Endothelial cell of umbilical vein (primary cell): ENCODE measurements at regions of chr19 and their contacts with region 1.

Region 1: DNA sequence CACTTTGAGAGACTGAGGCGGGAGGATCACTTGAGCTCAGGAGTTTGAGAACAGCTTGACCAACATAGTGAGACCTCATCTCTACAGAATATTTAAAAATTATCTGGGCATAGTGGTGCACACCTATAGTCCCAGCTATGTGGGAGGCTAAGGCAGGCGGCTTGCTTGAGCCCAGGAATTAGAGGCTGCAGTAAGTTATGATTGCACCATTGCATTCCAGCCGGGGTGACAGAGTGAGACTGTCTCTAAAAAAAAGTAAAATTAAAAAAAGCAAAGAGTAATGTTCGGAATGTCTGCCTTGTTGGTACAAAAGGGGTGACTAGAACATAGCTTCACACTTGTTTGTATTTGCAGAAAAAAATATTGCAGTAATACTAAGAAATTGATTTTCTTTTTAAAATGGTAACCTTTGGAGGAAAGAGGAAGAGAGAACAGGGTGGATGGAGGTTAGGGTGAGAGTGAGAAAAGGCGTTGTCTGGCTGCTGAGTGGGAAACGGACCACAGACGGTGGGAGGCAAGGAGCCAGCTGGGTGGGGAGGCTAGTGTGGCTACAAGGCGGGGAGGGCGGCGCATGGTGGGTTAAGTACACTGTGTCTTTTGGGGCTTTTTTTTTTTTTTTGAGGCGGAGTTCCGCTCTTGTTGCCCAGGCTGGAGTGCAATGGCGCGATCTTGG is 10.2 kb downstream of the PPP1R14A start:
- DNase-seq: no peak
- H3K4me3 ChIP-seq: no peak overlapping the region
- H3K27ac ChIP-seq: no peak overlapping the region
- H3K4me1 ChIP-seq: no peaks in the 10 kb centered on the region
- H3K27me3 ChIP-seq: no peaks in the 10 kb centered on the region
- CTCF ChIP-seq: no peak
- POLR2A ChIP-seq: no peak

Region 2: DNA sequence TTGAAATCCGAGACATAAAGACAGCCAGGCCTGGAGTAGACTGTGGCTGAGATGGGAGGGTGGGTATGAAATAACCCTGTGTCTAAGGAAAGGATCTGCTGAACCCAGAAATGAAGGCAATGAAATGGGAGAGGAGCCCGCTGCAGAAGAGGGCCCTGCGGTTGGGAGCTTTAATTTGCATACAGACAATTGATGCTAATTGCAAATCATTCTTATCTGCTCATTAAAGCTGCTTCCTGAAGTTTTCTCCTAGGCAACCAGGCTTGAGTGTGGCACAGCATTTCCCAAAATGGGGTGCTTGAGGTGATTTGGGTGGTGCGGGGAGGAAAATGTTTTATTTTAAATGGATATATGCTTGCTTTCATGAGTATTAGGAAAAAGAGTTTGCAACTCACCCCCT is 77.3 kb before region 1 on chr19:
- CTCF ChIA-PET with region 1: no interaction called
- POLR2A ChIA-PET with region 1: no interaction called
- dilution Hi-C with region 1: no loop called
- intact Hi-C with region 1: loop called (anchors 2 kb)
- DNase-seq: no peak
- H3K4me3 ChIP-seq: no peak overlapping the region
- H3K27ac ChIP-seq: no peak overlapping the region
- H3K4me1 ChIP-seq: no peaks in the 10 kb centered on the region
- H3K27me3 ChIP-seq: no peaks in the 10 kb centered on the region
- CTCF ChIP-seq: no peak
- POLR2A ChIP-seq: no peak

Region 3: DNA sequence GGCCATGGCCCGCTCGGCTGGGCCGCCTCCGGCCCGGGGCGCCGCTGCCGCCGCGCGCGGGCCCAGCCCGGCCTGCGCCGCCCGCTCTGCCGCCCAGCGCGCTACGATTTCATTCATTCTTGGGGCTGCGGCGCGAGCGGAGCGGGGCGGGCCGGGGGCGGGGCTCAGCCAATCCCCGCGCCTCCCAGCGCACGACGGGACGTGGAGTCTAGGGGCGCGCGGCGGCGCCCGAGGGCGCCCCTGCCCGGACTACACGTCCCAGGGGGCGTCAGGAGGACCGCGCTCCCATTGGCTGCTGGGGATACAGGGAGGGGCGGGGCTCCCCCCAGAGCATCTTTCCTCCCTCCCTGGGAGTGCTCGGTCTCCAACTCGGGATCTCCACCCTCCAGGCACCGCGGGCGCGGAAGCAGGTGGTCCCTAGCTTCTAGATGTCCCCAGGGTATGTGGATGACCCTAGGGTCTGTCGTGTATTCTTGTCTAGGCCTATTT is 16.3 kb before region 1 on chr19:
- CTCF ChIA-PET with region 1: interaction called, 26 read pairs
- POLR2A ChIA-PET with region 1: interaction called, 4 read pairs
- dilution Hi-C with region 1: no loop called
- intact Hi-C with region 1: no loop called
- DNase-seq: peak; percentile 77
- H3K4me3 ChIP-seq: peak overlapping the region in 1 of 3 experiments; percentile 14
- H3K27ac ChIP-seq: no peak overlapping the region
- H3K4me1 ChIP-seq: peaks cover 8% of the 10 kb centered on the region
- H3K27me3 ChIP-seq: peaks cover 9 to 14% of the 10 kb centered on the region in 2 experiments
- CTCF ChIP-seq: peak in 1 of 2 donors; percentile 13
- POLR2A ChIP-seq: no peak

Region 4: DNA sequence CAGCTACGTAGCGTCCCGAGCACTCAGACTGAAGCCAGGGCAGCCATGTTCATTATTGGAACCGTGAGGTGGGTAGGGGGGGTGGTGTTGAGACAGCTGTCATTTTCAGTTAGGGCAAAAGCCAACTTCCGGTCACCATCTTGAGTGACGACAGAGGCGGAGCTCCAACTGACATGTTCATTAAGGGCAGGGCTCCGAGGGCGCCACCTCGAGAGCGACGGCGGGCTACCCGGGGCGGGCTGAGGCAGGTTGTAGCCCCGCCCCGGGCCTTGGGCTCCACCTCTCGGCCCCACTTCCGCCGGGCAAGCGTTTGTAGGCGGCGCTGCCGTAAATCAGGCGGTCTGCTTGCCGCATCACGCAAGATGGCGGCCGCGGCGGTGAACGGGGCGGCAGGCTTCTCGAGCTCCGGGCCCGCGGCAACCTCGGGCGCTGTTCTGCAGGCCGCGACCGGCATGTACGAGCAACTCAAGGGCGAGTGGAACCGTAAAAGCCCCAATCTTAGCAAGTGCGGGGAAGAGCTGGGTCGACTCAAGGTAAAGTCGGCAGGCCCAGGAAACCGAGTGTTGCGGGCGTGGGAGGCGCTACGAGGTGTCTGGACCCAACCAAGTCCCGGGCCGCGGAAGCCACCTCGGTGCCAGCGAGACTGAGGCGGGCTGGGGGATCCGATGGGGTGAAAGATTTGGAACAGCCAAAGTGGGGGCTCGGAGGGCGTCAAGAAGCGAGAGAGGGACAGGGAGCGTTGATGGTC is 128.6 kb after region 1 on chr19 and contains the start of gene PSMD8:
- CTCF ChIA-PET with region 1: interaction called, 8 read pairs
- POLR2A ChIA-PET with region 1: no interaction called
- dilution Hi-C with region 1: no loop called
- intact Hi-C with region 1: loop called (anchors 1 kb)
- DNase-seq: peak; percentile 99
- H3K4me3 ChIP-seq: peak within 1 kb of the TSS; percentile 70 to 86 (median 70)
- H3K27ac ChIP-seq: peak within 1 kb of the TSS; percentile 87
- H3K4me1 ChIP-seq: peaks cover 14% of the 10 kb centered on the region
- H3K27me3 ChIP-seq: peaks cover 3 to 4% of the 10 kb centered on the region in 2 experiments
- CTCF ChIP-seq: peak in 1 of 2 donors; percentile 33
- POLR2A ChIP-seq: peak; percentile 98
- total RNA-seq, gene PSMD8: 203 and 215 TPM in 2 replicates